OCI-LY7 (cell line): ENCODE measurements at regions of chr5 and their contacts with region 1.

Region 1: GRCh38 chr5:126536874-126537273 is 58.1 kb downstream of the ALDH7A1 start:
- DNase-seq: no peak
- H3K4me3 ChIP-seq: no peak overlapping the region
- H3K27ac ChIP-seq: no peak overlapping the region
- H3K4me1 ChIP-seq: no peaks in the 10 kb centered on the region
- CTCF ChIP-seq: no peak

Region 2: DNA sequence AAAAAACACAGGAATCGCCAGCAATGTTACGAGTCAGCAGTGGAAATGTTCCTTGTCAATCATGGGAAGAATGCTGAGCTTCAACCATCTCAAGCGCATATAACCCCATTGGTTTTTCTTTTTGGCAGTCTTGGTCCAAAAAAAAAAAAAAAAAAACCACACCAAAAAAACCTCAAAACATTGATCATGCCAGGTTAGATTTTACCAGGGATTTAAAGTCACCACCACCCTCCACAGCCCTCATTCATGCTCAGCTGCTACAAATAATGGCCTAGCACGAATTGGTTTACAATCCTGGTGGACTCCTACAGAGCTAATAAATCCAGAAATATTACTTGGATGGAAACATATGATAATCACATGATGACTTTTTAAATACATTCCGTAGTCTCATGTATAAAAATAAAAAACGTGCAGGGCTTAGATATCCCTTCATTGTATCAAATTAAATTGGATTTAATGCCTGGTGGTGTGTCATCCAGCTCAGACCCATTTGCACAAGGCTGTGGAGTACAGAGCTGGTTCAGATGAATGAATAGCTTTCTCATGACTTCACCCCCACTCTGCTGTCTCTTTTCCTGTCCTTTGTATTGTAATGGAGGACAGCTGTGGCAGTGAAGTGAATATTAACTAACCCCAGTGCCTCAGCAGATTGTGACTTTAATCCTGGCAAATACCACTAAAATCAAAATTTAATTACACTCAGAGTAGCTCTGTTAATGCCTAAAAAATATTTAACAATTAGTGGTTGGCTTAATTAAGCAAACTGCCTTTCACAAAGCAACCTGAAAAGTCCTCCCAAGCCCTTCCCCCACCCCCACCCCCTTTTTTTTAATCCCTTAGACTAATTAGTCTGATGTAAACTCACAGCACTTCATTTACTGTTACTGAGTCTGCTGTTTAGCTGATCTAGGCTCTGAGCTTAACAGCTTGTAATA is 1163.9 kb before region 1 on chr5:
- CTCF ChIA-PET with region 1: no interaction called
- POLR2A ChIA-PET with region 1: no interaction called
- intact Hi-C with region 1: no loop called
- DNase-seq: peak; percentile 4
- H3K4me3 ChIP-seq: no peak overlapping the region
- H3K27ac ChIP-seq: no peak overlapping the region
- H3K4me1 ChIP-seq: peaks cover 22% of the 10 kb centered on the region
- CTCF ChIP-seq: no peak

Region 3: DNA sequence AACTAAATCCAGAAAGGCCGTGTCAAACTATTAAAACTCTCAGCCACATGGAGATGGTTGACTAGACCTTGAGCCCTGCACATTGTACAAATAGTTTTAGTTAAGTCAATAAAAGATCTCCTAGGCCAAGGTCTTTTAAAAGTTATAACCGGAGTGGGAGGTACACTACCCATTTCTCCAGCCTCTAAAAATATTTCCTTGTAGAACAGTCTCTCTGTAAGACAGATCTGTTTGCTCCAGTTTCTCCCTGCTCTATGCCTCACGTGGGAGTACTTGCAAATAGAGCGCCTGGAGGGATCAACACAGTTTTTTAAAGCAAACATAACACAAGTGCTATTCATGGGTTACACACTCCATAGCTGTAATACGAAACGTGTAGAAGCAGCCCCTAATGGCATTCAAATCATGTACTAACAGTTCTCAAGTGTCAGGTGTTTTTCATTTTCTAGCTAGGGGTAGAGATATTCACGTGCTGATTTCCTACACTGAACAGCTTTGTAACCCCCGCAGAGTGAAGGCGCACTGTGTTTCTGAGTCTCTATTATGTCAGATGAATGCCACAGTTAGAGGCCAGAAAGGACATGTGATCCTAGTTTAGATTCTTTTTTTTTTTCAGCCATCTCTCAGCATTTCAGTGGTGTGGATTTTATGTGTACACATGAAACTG is 817.1 kb before region 1 on chr5:
- CTCF ChIA-PET with region 1: no interaction called
- POLR2A ChIA-PET with region 1: no interaction called
- intact Hi-C with region 1: no loop called
- DNase-seq: no peak
- H3K4me3 ChIP-seq: no peak overlapping the region
- H3K27ac ChIP-seq: no peak overlapping the region
- H3K4me1 ChIP-seq: no peaks in the 10 kb centered on the region
- CTCF ChIP-seq: no peak

Region 4: GRCh38 chr5:126499853-126500342 is 37.0 kb before region 1 on chr5:
- CTCF ChIA-PET with region 1: no interaction called
- POLR2A ChIA-PET with region 1: no interaction called
- intact Hi-C with region 1: loop called (anchors 5 kb)
- DNase-seq: peak; percentile 61
- H3K4me3 ChIP-seq: no peak overlapping the region
- H3K27ac ChIP-seq: no peak overlapping the region
- H3K4me1 ChIP-seq: peaks cover 2% of the 10 kb centered on the region
- CTCF ChIP-seq: peak; percentile 82

Region 5: GRCh38 chr5:126610160-126610559 is 73.3 kb after region 1 on chr5:
- CTCF ChIA-PET with region 1: no interaction called
- POLR2A ChIA-PET with region 1: no interaction called
- intact Hi-C with region 1: no loop called
- DNase-seq: no peak
- H3K4me3 ChIP-seq: peak overlapping the region; percentile 86
- H3K27ac ChIP-seq: peak overlapping the region; percentile 97
- H3K4me1 ChIP-seq: peaks cover 94% of the 10 kb centered on the region
- CTCF ChIP-seq: no peak